ENCODE measurements at regions of chr3 and their contacts with region 1.

Region 1: DNA sequence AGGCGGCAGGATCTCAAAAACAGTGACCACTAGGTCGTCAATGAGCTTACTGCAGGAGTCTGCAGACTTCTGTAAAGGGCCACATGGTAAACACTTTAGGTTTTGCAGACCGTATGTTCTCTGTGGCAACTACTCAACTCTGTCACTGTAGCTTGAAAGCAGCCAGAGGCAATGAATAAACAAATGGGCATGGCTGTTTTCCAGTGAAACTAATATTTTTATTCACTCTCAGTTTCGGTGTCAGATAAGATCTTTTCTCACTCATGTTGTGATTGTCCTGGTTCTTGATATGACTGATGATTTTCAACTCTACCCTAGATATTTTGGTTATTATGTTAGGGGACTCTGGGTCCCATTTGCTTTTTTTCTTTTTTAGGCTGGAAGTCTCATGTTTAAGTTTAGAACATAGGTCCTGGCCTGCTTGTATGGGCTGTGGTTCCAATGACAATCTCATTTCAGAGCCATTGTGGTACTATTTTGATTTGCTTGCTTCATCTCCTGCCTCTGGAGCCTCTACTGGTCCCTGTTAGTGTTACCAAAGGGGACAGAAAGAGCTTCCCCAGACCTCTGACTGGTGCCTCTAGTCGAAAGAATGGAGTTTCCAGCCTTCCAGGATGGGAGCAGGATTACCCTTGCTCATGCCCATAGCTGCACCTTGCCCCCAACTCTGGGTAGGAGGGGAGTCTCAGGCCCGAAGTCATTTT is 222.0 kb downstream of the STT3B start:
- DNase-seq: no peak
- H3K4me3 Mint-ChIP-seq: no peak overlapping the region
- H3K27ac Mint-ChIP-seq: peak overlapping the region; percentile 94
- H3K4me1 Mint-ChIP-seq: peaks cover 41% of the 10 kb centered on the region
- H3K27me3 Mint-ChIP-seq: peaks cover 2% of the 10 kb centered on the region

Region 2: GRCh38 chr3:31077021-31077601 is 677.6 kb before region 1 on chr3:
- CTCF ChIA-PET with region 1: no interaction called
- intact Hi-C with region 1: loop called (anchors 5 kb)
- DNase-seq: peak; percentile 72
- H3K4me3 Mint-ChIP-seq: no peak overlapping the region
- H3K27ac Mint-ChIP-seq: peak overlapping the region; percentile 4
- H3K4me1 Mint-ChIP-seq: peaks cover 18% of the 10 kb centered on the region
- H3K27me3 Mint-ChIP-seq: no peaks in the 10 kb centered on the region

Region 3: DNA sequence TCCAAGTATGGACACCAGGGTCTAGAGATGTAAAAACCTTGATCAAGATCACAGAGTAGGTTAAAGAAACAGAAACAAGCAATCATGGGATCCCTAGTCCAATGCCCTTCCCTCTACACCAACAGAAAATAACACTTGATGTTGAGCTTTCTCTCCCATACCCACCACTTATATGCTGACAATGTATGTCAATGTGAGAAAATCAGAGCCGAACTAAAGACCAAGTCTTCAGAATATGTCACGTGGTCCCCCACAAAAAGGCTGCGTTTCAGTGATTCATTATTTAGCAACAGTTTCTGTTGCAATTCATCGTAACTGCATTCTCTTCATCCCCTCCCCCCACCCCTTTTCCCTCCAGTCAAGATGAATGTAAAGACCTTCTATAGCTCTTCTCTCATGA is 500.9 kb before region 1 on chr3:
- CTCF ChIA-PET with region 1: no interaction called
- intact Hi-C with region 1: loop called (anchors 1 kb)
- DNase-seq: peak; percentile 59
- H3K4me3 Mint-ChIP-seq: no peak overlapping the region
- H3K27ac Mint-ChIP-seq: peak overlapping the region; percentile 65
- H3K4me1 Mint-ChIP-seq: peaks cover 51% of the 10 kb centered on the region
- H3K27me3 Mint-ChIP-seq: no peaks in the 10 kb centered on the region

Region 4: DNA sequence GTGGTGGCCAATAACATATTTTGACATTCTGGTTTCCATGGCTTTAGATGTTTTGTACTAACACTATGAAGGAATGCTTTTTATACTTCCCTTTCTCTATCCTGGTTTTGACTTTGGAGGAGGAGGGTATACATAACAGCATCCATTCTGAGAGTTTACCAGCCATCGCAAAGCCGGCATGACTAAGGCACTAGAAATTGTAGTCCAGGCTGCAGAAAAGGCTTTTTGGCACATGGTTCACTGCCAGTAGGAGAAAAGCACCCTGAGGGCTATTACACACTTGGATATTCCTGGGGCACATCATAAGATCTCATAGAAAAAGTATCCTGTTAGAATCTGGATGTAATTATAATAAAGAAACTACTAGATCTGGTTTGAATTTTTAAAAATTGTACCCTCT is 120.2 kb before region 1 on chr3:
- CTCF ChIA-PET with region 1: no interaction called
- intact Hi-C with region 1: loop called (anchors 2 kb)
- DNase-seq: no peak
- H3K4me3 Mint-ChIP-seq: no peak overlapping the region
- H3K27ac Mint-ChIP-seq: peak overlapping the region; percentile 24
- H3K4me1 Mint-ChIP-seq: peaks cover 41% of the 10 kb centered on the region
- H3K27me3 Mint-ChIP-seq: no peaks in the 10 kb centered on the region

Region 5: DNA sequence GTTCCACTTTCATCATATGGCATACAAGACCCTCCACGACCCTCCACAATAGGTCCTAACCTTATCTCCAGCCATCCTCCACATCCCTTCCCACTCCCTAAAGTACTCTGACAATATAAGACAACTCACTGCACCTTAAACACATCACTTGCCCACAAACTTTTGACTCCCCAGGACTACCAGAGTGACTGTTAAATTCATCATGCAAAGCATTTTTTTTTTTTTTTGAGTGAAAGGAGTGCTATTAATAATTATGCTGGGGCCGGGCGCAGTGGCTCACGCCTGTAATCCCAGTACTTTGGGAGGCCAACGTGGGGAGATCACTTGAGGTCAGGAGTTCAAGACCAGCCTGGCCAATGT is 170.5 kb after region 1 on chr3:
- CTCF ChIA-PET with region 1: no interaction called
- intact Hi-C with region 1: loop called (anchors 5 kb)
- DNase-seq: peak; percentile 9
- H3K4me3 Mint-ChIP-seq: no peak overlapping the region
- H3K27ac Mint-ChIP-seq: no peak overlapping the region
- H3K4me1 Mint-ChIP-seq: peaks cover 23% of the 10 kb centered on the region
- H3K27me3 Mint-ChIP-seq: no peaks in the 10 kb centered on the region